ENCODE measurements at regions of chr1 and their contacts with region 1.

Region 1: GRCh38 chr1:6569033-6569432 is 10.8 kb upstream of the ZBTB48 start:
- DNase-seq: no peak

Region 2: DNA sequence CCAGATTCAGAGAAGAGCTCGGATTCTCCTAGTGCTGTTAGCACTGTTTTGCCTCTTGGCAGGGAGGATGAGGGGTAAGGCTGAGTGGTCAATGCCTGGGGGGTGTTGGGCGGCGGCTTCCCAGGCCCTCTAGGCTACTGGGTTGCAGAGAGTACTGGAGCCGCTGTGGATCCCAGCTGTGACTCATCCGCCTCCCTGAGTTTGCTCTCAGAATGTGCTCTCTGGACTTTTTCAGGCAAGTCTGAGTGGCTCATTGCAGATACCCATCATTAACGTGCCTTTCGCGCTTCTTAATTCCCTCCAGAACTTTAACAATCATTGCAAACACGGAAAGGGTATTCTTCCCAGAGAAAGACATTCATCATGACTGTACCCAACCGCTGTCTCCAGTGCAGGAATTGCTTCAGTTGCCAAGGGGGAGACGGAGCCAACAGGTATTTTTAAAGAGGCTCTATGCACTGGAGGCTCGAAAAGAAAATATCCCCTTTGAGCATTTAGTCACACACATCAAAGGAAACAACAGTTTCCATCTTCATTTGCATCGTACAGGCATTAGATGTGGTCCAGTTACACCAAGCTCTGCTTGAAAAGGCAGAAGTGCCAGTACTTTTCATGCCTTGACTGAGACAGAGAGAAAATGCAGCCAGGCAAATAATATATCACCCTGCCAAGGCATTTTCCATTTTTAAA is 201.9 kb after region 1 on chr1:
- intact Hi-C with region 1: loop called in 1 of 2 experiments (anchors 5 kb)
- DNase-seq: peak; percentile 60

Measured in posterior vena cava (tissue), 2 donors.